Esophagus muscularis mucosa (tissue), 4 donors: ENCODE measurements at regions of chr4 and their contacts with region 1.

Region 1: DNA sequence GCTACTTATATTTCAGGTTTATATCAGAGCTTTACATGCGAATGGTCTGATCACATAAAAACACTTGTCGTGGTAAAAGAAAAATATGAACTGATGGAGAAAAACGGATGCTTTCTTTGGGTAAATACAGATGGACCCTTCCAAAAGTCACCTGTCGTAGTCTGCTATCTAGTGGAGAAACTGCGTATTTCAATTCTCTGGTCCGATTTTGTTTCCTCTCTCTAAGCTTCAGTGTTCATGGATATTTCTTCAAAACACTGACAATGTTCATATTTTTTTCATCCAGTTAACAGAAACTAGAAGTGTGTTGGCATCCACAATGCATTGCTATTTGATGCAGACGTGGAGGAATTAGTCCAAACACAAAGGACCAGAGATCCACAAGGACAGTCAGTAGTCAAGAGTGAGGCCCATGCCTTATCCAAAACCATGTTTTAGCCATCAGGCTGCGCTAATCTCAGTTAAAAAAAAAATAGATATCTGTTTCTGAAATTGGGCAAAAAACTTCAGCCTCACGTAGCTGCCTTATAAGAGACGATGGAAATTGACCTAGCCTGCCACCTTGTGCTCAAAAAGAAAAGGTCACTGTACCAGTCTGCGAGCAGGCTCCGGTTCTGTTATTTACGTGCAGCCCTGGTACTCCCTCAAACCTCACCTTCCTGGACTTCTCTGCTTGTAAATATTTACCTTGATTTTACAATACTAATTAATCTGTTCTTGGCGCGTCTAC is 16.0 kb downstream of the MEPE start:
- DNase-seq: no peak
- H3K4me3 ChIP-seq: peak overlapping the region; percentile 27 to 44 (median 33)
- H3K27ac ChIP-seq: peak overlapping the region in 2 of 4 donors; percentile 15 to 42
- H3K4me1 ChIP-seq: peaks cover 1 to 13% (median 10%) of the 10 kb centered on the region in 4 donors
- H3K27me3 ChIP-seq: no peaks in the 10 kb centered on the region
- CTCF ChIP-seq: peak; percentile 60 to 67 (median 63)
- EP300 ChIP-seq: no peak
- POLR2A ChIP-seq: no peak

Region 2: DNA sequence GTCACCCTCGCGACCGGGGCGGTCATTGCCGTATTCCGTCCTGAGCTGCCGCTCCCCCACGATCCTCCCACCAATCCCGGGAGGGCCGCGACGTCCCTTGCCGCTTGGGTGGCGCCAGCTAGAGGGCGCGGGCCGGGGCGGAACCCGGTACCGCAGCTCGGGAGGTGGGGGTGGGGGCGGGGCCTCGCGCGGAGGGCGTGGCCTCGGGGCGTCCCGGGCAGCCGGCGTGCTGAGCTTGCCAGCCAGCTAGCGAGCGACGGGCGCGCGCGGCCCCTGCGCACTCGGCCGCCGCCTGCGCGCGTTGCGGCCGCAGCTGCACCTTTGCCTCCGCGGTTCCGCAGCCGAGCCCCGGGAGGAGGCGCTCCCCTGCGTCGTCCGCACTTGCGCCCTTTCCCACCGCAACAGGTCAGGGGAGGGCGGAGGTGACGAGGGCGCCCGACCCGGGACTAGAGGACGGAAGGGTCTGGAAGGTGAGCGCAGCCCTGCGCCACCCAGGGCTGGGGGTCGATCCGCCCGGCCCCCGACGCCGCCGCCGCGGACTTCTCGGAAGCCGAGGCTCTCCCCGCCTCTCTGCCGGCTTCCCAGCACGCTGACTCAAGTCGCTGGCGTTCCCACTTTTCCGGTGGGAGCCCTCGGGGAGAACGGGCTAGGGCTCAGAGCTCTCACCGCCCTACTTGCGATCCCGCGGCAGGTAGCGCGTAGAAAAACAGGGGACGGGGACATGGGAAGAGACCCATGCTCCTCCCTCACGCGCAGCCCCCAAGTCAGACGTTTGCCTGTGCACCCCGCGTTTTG is 913.8 kb before region 1 on chr4 and contains the start of gene AFF1:
- intact Hi-C with region 1: loop called (anchors 5 kb)
- DNase-seq: peak; percentile 97
- H3K4me3 ChIP-seq: peak within 1 kb of the TSS; percentile 94 to 99 (median 97)
- H3K27ac ChIP-seq: peak within 1 kb of the TSS; percentile 97 to 99 (median 99)
- H3K4me1 ChIP-seq: peaks cover 25 to 55% (median 47%) of the 10 kb centered on the region in 4 donors
- H3K27me3 ChIP-seq: peaks cover 0 to 3% (median 0%) of the 10 kb centered on the region in 4 donors
- CTCF ChIP-seq: peak; percentile 56 to 68 (median 61)
- EP300 ChIP-seq: peak; percentile 65
- POLR2A ChIP-seq: peak; percentile 78
- total RNA-seq, gene AFF1: 53.6 to 85.2 (median 70.6) TPM

Region 3: GRCh38 chr4:87375719-87376291 is 473.0 kb before region 1 on chr4:
- intact Hi-C with region 1: loop called (anchors 10 kb)
- DNase-seq: no peak
- H3K4me3 ChIP-seq: no peak overlapping the region
- H3K27ac ChIP-seq: peak overlapping the region in 2 of 4 donors; percentile 26 to 47
- H3K4me1 ChIP-seq: peaks cover 0 to 15% (median 8%) of the 10 kb centered on the region in 4 donors
- H3K27me3 ChIP-seq: no peaks in the 10 kb centered on the region
- CTCF ChIP-seq: peak; percentile 56 to 82 (median 67)
- EP300 ChIP-seq: no peak
- POLR2A ChIP-seq: no peak

Region 4: DNA sequence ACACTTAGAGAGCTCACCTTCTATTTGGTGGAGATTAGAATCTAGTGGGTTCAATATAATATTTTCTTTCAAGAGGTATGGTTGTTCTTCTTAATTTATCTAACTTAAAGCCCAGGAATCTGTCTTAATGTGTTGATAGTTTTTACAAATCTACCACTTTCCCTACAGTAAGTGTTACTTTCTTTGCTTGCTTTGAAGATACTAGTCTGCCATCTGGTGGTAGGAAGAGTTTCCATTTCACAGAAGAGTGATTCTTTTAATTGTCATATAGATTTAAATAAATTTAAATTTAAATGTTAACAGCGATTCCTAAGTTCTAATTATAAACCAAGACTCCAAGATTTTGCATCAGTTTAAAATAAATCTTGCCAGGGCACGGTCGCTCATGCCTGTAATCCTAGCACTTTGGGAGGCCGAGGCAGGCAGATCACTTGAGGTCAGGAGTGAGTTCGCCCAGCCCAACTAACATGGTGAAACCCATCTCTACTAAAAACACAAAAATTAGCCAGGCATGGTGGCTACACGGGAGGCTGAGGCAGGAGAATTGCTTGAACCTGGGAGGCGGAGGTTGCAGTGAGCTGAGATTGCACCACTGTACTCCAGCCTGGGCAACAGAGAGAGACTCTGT is 382.9 kb before region 1 on chr4:
- intact Hi-C with region 1: loop called (anchors 10 kb)
- DNase-seq: no peak
- H3K4me3 ChIP-seq: no peak overlapping the region
- H3K27ac ChIP-seq: peak overlapping the region in 2 of 4 donors; percentile 24 to 42
- H3K4me1 ChIP-seq: peaks cover 0 to 17% (median 9%) of the 10 kb centered on the region in 4 donors
- H3K27me3 ChIP-seq: no peaks in the 10 kb centered on the region
- CTCF ChIP-seq: peak; percentile 73 to 79 (median 75)
- EP300 ChIP-seq: no peak
- POLR2A ChIP-seq: no peak

Region 5: DNA sequence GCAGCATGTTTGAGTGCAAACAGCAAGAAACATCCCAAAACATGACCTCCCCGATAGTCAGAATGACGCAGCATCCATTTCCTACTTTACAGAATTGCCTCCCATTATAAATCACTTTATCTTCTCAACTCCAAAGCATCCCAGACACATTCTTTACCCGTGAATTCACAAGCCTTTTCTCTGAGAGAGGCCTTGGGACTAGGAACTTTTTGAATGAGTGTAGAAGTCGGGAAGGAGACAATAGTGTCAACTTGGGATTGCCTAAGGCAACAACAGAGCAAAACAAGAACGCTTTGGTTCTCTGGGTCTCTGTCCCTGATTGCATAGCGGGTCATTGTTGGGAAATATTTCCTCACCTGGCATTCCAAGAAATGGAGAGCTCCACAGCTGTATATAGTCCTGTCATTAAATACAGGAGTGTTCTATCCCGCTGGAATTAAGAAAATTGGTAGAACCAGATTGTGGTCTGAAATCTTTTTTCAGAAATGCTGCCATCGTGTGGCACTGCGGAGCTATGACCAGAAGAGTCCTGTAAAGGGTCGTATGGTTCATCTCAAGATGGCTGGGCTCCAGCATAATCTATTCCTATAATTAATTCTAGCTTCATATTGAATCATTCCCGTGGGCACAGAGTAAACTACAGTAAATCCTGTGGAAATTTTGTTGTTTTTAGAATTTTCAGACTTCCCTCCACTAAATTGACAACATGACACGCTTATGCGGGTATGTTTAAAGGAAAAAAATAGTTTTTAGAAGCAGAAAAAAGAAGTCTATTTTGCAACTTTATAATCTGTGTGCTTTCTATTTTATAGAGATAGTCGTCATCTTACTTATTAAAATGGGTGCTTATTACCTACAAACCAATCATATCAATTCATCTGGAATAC is 124.7 kb after region 1 on chr4:
- intact Hi-C with region 1: loop called (anchors 1 kb)
- DNase-seq: no peak
- H3K4me3 ChIP-seq: peak overlapping the region in 3 of 4 donors; percentile 19 to 33 (median 19)
- H3K27ac ChIP-seq: peak overlapping the region in 1 of 4 donors; percentile 2
- H3K4me1 ChIP-seq: peaks cover 0 to 7% (median 3%) of the 10 kb centered on the region in 4 donors
- H3K27me3 ChIP-seq: no peaks in the 10 kb centered on the region
- CTCF ChIP-seq: peak; percentile 74 to 88 (median 85)
- EP300 ChIP-seq: no peak
- POLR2A ChIP-seq: no peak

Region 6: DNA sequence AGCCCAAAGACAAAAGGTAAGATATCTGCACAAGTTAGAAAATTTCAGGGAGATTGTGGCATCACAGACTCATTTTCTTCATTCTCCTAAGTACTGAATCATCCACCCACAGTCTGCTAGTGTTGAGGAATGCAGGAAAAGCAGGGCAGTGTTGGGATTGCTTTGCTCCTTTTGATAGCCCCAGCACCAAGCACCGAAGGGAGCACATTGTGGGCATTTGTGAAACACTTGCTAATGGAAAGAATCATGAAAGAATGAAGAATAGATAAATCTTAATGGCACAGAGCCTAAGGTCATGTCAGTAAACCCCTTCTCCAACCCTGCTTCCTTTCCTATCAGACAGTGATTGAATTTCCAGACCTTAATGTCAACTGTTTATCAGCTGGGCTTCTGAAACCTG is 1561.9 kb after region 1 on chr4:
- intact Hi-C with region 1: no loop called
- DNase-seq: no peak
- H3K4me3 ChIP-seq: no peak overlapping the region
- H3K27ac ChIP-seq: no peak overlapping the region
- H3K4me1 ChIP-seq: no peaks in the 10 kb centered on the region
- H3K27me3 ChIP-seq: no peaks in the 10 kb centered on the region
- CTCF ChIP-seq: no peak
- EP300 ChIP-seq: no peak
- POLR2A ChIP-seq: no peak